ENCODE measurements at regions of chr15 and their contacts with region 1.

Region 1: DNA sequence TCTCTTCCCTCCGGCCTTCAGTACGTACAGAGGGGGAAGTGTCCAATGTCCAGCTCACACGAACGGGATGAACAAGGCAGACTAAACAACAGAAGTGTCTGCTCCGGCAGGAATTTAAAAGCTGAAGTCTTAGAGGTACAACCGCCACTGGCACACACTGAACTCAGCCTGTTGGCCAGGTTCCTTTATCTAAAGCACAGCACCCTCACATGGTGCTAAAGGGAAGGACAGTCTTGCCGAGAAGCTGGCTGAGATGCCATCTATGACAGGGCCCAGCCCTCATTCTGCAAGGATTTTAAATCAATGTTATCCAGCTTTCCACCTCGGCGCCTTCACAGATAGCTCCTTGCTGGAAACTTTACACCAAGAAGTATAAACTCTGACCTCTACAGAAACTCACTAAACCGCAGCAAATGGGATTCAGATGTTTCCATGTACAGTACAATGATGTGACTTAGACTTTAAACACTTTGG is 2.8 kb downstream of the ADAMTS17 start:
- DNase-seq: peak; percentile 61 to 91
- H3K4me3 ChIP-seq: no peak overlapping the region
- H3K27ac ChIP-seq: no peak overlapping the region
- H3K4me1 ChIP-seq: peaks cover 7 to 34% (median 17%) of the 10 kb centered on the region in 4 donors
- H3K27me3 ChIP-seq: peaks cover 0 to 35% (median 12%) of the 10 kb centered on the region in 3 donors
- CTCF ChIP-seq: peak in 5 of 7 experiments; percentile 30 to 76 (median 71)
- EP300 ChIP-seq: no peak
- POLR2A ChIP-seq: no peak

Region 2: DNA sequence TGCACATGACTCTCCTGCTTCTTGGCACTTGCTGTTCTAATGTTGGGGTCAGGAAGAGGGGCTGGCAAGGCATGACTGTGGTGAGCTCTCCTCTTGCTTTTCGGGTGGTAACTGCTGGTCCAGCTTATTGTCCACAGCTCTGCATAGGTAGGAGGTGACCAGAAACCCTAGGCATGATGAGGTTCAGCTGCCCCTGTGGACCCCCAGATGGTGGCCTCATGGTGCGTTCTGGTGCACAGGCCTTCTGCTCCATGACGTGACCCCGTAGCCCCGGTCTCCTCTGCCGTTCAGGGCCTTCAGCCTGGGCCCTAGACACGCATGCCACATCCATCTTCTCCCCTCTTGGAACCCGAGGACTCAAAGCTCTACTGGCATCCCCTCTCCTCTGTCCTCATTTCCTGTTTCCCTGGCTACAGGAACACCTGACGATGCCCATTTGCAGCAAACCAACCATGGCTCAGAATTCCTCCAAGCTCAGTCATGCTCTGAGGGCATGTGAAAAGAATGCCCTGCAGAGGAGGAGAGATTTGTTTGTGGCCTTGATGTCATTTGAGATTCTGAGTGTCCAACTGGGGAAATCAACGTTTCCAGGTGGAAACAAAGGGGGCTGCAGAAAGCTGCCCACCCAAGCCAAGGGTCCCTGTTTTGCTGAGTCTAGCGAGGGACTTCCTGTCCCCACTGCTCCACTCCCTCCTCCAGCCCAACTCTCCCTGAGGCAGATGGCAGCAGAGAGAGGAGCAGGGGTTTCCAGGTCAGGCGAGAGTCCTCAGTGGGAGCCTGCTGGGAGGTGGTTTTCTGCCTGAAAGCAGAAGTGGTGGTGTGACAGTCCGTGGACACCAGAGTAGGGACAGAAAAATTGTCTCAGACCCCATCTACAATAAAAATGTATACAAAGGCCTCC is 407.1 kb before region 1 on chr15:
- intact Hi-C with region 1: loop called (anchors 10 kb)
- DNase-seq: no peak
- H3K4me3 ChIP-seq: no peak overlapping the region
- H3K27ac ChIP-seq: no peak overlapping the region
- H3K4me1 ChIP-seq: peaks cover 0 to 10% (median 2%) of the 10 kb centered on the region in 4 donors
- H3K27me3 ChIP-seq: peaks cover 0 to 13% (median 0%) of the 10 kb centered on the region in 3 donors
- CTCF ChIP-seq: no peak
- EP300 ChIP-seq: no peak
- POLR2A ChIP-seq: no peak

Region 3: DNA sequence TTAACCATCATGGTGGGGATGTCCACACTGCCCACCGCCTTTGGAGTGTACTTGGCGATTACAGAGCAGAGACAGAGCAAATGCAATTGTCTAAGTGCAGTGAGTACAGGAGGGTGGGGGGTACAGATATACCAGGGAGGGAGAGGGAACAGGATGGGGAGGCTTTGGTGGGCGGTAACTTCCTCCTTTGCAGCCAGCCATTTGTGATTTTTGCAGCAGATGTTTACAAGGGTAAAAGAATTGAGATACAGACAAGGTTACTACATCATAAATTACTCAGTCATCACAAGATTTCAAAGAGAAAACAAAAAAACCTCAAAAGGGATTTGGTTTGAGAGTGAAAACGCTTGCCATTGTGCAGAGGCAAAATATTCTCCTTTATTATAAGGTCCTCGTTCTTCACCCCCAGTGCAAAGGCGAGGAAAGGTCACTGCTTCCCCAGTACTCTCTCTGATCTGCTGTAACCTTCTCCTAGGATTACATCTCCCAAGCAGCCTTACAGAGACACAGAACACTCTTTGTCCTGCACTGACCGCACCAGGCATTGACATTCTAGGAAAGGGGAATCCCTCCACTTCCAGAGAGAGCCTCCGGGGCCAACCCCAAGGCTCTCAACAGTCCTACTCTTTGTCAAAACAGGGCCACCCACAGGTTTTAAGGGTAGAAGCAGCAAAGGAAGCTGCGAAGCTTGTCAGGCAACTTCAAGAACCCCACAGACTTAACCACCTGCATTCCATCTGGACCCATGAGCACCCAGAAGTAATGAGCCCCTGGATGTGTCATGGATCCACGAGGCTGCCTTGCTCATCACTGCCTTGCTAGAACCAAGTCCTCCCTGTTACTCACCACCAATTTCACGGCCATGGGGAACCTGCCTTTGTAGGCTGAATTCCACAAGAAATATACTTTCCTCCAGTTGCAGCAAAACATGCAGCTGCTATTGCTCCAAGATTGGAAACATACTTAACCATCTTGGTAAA is 114.5 kb before region 1 on chr15:
- intact Hi-C with region 1: no loop called
- DNase-seq: no peak
- H3K4me3 ChIP-seq: no peak overlapping the region
- H3K27ac ChIP-seq: no peak overlapping the region
- H3K4me1 ChIP-seq: no peaks in the 10 kb centered on the region
- H3K27me3 ChIP-seq: no peaks in the 10 kb centered on the region
- CTCF ChIP-seq: no peak
- EP300 ChIP-seq: no peak
- POLR2A ChIP-seq: no peak

Region 4: DNA sequence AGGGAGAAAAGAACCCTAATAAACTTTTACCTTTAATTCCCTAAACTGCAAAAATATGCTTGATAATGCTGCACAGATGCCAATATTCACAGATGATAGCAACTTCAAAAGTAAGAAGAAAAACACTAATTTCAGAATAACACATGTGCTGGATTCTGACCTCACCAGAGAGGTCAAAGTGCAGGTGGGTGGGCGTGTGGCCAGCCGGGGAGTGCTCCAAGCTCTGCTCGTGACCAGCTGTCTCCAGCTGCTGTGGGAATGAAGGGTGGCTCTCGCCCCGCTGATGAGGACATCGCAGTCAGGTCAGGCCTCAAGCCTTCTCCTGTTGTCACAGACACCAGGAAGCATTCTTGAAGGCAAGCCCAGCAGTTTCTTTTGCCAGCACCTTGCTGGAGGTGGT is 54.3 kb before region 1 on chr15:
- intact Hi-C with region 1: no loop called
- DNase-seq: peak; percentile 36 to 65
- H3K4me3 ChIP-seq: no peak overlapping the region
- H3K27ac ChIP-seq: no peak overlapping the region
- H3K4me1 ChIP-seq: no peaks in the 10 kb centered on the region
- H3K27me3 ChIP-seq: no peaks in the 10 kb centered on the region
- CTCF ChIP-seq: no peak
- EP300 ChIP-seq: no peak
- POLR2A ChIP-seq: no peak